Endothelial cell of umbilical vein (primary cell): ENCODE measurements at regions of chrX and their contacts with region 1.

Region 1: GRCh38 chrX:134431894-134432293 is 28.1 kb upstream of the HPRT1 start:
- DNase-seq: peak; percentile 54
- H3K4me3 ChIP-seq: no peak overlapping the region
- H3K27ac ChIP-seq: peak overlapping the region; percentile 28
- H3K4me1 ChIP-seq: peaks cover 8% of the 10 kb centered on the region
- H3K27me3 ChIP-seq: no peaks in the 10 kb centered on the region
- CTCF ChIP-seq: no peak
- POLR2A ChIP-seq: no peak

Region 2: GRCh38 chrX:134171661-134172587 is 260.0 kb before region 1 on chrX:
- CTCF ChIA-PET with region 1: no interaction called
- POLR2A ChIA-PET with region 1: no interaction called
- dilution Hi-C with region 1: no loop called
- intact Hi-C with region 1: no loop called
- DNase-seq: peak; percentile 4
- H3K4me3 ChIP-seq: peak overlapping the region; percentile 23 to 68 (median 45)
- H3K27ac ChIP-seq: no peak overlapping the region
- H3K4me1 ChIP-seq: no peaks in the 10 kb centered on the region
- H3K27me3 ChIP-seq: peaks cover 24 to 40% of the 10 kb centered on the region in 2 experiments
- CTCF ChIP-seq: no peak
- POLR2A ChIP-seq: no peak

Region 3: DNA sequence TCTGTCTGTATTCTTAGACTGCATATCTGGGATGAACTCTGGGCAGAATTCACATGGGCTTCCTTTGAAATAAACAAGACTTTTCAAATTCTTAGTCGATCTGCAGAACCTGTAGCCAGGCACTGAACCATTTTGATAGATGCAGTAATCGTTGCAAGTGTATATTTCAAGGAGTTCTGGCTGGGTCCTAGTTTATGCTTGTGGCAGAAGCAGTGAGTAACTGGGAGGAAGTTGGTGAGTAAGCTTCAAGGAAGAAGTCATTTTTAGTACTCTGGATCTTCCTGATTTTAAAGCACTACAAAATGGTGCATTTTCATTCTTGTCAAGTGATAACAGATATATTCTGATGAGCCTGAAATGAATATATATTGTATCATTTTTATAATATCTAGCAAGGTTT is 37.6 kb after region 1 on chrX:
- CTCF ChIA-PET with region 1: no interaction called
- POLR2A ChIA-PET with region 1: no interaction called
- dilution Hi-C with region 1: no loop called
- intact Hi-C with region 1: loop called (anchors 5 kb)
- DNase-seq: peak; percentile 38
- H3K4me3 ChIP-seq: no peak overlapping the region
- H3K27ac ChIP-seq: no peak overlapping the region
- H3K4me1 ChIP-seq: peaks cover 14% of the 10 kb centered on the region
- H3K27me3 ChIP-seq: no peaks in the 10 kb centered on the region
- CTCF ChIP-seq: no peak
- POLR2A ChIP-seq: no peak

Region 4: DNA sequence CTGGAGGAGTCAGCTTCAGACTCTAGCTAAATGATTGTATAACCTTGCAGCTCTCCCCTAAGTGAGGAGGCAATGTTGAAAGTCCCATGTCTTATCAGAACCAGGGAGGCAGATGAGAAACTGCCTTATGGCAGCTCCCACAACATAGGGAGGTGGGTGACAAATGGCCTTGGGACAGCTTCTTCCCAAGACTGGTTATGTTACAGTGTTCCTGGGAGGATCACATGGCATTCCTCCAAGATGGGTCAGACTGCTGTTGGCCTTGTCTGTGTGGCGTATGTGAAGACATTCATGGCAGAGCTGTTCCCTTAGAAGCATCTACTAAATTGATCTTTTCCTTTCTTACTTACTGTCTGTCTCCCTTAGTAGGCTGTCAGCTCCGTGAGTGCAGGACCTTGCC is 70.0 kb after region 1 on chrX:
- CTCF ChIA-PET with region 1: no interaction called
- POLR2A ChIA-PET with region 1: no interaction called
- dilution Hi-C with region 1: no loop called
- intact Hi-C with region 1: no loop called
- DNase-seq: no peak
- H3K4me3 ChIP-seq: no peak overlapping the region
- H3K27ac ChIP-seq: no peak overlapping the region
- H3K4me1 ChIP-seq: no peaks in the 10 kb centered on the region
- H3K27me3 ChIP-seq: no peaks in the 10 kb centered on the region
- CTCF ChIP-seq: no peak
- POLR2A ChIP-seq: no peak